Endothelial cell of umbilical vein (primary cell): ENCODE measurements at regions of chr6 and their contacts with region 1.

Region 1: GRCh38 chr6:27753668-27754407 is 158.4 kb downstream of the OR2B2 start:
- DNase-seq: peak; percentile 37
- H3K4me3 ChIP-seq: peak overlapping the region; percentile 31 to 61 (median 38)
- H3K27ac ChIP-seq: no peak overlapping the region
- H3K4me1 ChIP-seq: peaks cover 5% of the 10 kb centered on the region
- H3K27me3 ChIP-seq: peaks cover 35 to 36% of the 10 kb centered on the region in 2 experiments
- CTCF ChIP-seq: no peak
- POLR2A ChIP-seq: no peak

Region 2: DNA sequence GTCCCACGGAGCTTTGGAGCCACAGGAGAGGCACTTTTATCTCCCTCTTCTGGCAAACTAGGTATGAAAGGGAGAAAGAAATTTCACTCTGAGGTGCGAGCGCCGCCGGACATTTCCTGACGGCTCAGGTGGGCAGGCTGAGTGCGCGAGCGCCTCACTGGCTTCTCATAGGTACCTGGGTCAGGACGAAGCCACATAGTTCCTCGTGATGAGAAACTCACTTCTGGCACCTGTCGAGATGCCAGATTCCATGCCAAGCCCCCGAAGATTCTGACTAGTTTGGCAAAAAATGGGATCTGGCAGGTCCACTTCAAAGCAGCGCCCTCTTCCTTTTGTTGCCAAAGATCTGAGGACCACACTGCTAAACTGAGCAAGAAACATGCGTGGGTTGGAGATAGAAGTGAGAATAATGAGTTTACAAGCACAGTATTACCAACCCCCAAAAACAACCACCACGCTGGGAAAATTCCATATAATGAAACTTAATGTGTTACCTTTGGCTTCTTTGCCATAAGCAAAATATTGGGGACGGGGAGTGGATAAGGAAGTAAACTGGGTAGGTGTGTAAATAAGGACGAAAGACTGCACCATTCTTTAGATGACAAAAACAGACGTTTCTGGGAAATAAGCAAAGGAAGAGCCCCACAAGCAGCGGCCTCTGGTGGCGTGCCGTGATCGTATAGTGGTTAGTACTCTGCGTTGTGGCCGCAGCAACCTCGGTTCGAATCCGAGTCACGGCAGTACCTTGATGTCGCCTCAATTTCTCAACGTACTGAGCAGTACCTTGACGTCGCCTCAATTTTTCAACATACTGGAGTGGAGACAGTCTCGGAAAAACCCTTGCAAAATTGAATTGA is 596.2 kb before region 1 on chr6:
- CTCF ChIA-PET with region 1: interaction called, 14 read pairs
- POLR2A ChIA-PET with region 1: no interaction called
- dilution Hi-C with region 1: no loop called
- intact Hi-C with region 1: no loop called
- DNase-seq: peak; percentile 57
- H3K4me3 ChIP-seq: peak overlapping the region; percentile 30 to 64 (median 59)
- H3K27ac ChIP-seq: no peak overlapping the region
- H3K4me1 ChIP-seq: peaks cover 10% of the 10 kb centered on the region
- H3K27me3 ChIP-seq: peaks cover 8 to 11% of the 10 kb centered on the region in 2 experiments
- CTCF ChIP-seq: peak; percentile 42 to 63
- POLR2A ChIP-seq: no peak

Region 3: GRCh38 chr6:27295301-27296081 is 458.3 kb before region 1 on chr6:
- CTCF ChIA-PET with region 1: interaction called, 8 read pairs
- POLR2A ChIA-PET with region 1: no interaction called
- dilution Hi-C with region 1: no loop called
- intact Hi-C with region 1: loop called (anchors 10 kb)
- DNase-seq: peak; percentile 37
- H3K4me3 ChIP-seq: peak overlapping the region; percentile 18 to 80 (median 72)
- H3K27ac ChIP-seq: no peak overlapping the region
- H3K4me1 ChIP-seq: peaks cover 17% of the 10 kb centered on the region
- H3K27me3 ChIP-seq: peaks cover 16 to 20% of the 10 kb centered on the region in 2 experiments
- CTCF ChIP-seq: no peak
- POLR2A ChIP-seq: no peak

Region 4: DNA sequence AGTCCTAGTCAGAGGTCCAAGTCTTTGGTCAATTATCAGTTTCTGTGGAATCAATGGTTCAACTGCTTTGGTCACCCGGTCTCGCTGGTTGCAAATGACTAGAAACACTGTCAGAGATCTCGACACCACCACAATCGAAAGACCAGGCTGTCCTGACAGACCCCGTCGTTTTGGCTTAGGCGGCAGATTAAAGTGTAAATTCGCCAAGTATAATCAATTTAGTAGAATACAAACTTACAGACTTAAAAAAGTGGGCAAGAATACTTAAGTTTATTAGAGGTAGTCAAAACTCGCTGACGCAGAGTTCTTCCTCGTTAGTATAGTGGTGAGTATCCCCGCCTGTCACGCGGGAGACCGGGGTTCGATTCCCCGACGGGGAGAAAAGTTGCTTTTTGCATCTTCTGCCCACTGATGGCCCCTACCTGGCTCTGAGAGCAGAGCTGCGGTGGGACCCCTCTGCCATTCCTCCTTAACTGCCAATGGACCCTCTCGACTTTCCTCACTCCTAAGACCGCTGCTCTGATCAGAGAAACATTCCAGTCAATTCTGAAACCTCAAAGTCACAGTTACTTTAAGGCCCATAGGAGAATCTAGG is 250.3 kb before region 1 on chr6:
- CTCF ChIA-PET with region 1: interaction called, 8 read pairs
- POLR2A ChIA-PET with region 1: no interaction called
- dilution Hi-C with region 1: no loop called
- intact Hi-C with region 1: loop called (anchors 1 kb)
- DNase-seq: peak; percentile 83
- H3K4me3 ChIP-seq: peak overlapping the region; percentile 38 to 97 (median 95)
- H3K27ac ChIP-seq: peak overlapping the region; percentile 15
- H3K4me1 ChIP-seq: peaks cover 14% of the 10 kb centered on the region
- H3K27me3 ChIP-seq: peaks cover 5 to 11% of the 10 kb centered on the region in 2 experiments
- CTCF ChIP-seq: no peak
- POLR2A ChIP-seq: no peak

Region 5: DNA sequence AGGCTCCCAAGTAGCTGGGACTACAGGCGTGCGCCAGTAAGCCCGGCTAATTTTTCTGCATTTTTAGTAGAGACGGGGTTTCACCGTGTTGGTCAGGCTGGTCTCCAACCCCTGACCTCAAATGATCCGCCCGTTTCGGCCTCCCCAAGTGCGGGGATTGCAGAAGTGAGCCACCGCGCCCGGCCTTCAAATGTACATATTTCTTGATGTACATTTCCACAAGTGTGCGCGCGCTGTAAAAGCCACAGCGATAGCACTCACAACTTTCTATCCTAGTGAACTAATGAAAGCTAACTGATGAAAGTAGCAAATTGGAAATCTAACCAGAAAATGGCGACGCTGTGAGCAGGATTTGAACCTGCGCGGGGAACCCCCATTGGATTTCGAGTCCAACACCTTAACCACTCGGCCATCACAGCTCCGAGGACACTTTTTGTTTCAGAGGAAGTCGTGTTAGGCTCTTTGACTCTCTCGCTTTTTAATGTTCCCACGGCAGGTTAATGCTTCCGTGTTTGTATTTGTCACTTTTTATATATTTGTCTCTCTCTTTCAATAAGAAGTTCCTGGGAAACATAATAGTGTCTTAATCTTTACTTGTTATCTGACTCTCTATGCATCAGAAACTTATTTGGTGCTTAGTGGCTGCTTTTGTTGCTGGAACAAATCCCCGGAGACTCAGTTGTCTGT is 81.6 kb before region 1 on chr6:
- CTCF ChIA-PET with region 1: interaction called, 15 read pairs
- POLR2A ChIA-PET with region 1: no interaction called
- dilution Hi-C with region 1: no loop called
- intact Hi-C with region 1: loop called (anchors 1 kb)
- DNase-seq: peak; percentile 40
- H3K4me3 ChIP-seq: no peak overlapping the region
- H3K27ac ChIP-seq: no peak overlapping the region
- H3K4me1 ChIP-seq: peaks cover 10% of the 10 kb centered on the region
- H3K27me3 ChIP-seq: peaks cover 7 to 11% of the 10 kb centered on the region in 2 experiments
- CTCF ChIP-seq: no peak
- POLR2A ChIP-seq: no peak

Region 6: DNA sequence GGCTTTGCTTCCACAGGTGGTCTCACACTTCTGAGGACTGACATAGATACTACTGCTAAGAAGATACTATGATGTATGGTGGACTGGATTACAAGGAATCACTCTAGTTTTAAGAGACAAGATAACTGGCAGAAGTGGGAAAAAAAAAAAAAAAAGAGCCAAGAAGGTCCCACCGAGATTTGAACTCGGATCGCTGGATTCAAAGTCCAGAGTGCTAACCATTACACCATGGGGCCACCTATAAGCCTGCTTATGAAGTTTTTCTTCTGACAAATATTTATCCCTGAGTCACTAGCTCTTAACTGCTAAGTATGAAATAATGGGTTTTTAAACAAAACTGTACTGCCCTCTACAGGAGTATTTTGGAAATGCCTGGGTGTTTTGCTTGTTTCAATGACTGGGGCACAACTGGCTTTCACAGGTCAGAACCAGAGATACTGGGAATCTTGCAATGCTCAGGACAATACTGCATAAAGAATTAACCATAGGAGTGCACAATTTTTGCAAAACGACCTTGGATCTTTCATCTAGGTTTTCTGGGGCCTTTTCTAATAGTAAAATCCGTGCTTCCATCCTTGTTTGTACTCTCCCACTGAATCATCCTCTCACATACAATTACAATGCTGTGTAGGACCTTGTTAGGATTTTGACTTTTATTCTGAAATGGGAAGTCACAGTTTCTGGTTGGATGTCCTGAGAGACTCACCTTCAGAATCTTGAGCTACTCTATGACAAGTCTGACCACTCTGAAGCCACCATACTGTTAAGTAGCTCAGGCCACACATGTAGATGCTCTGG is 42.1 kb after region 1 on chr6:
- CTCF ChIA-PET with region 1: interaction called, 38 read pairs
- POLR2A ChIA-PET with region 1: no interaction called
- dilution Hi-C with region 1: no loop called
- intact Hi-C with region 1: no loop called
- DNase-seq: peak; percentile 95
- H3K4me3 ChIP-seq: no peak overlapping the region
- H3K27ac ChIP-seq: no peak overlapping the region
- H3K4me1 ChIP-seq: peaks cover 7% of the 10 kb centered on the region
- H3K27me3 ChIP-seq: no peaks in the 10 kb centered on the region
- CTCF ChIP-seq: peak; percentile 60 to 69
- POLR2A ChIP-seq: no peak